ENCODE measurements at regions of chr6 and their contacts with region 1.

Region 1: GRCh38 chr6:117482240-117483003 is at the start of gene DCBLD1:
- DNase-seq: peak; percentile 75
- H3K4me3 Mint-ChIP-seq: peak within 1 kb of the TSS; percentile 92
- H3K27ac Mint-ChIP-seq: peak within 1 kb of the TSS; percentile 82
- H3K4me1 Mint-ChIP-seq: peaks cover 11% of the 10 kb centered on the region
- H3K27me3 Mint-ChIP-seq: no peaks in the 10 kb centered on the region
- CTCF ChIP-seq: no peak
- total RNA-seq, gene DCBLD1: 25.4 and 26.8 TPM in 2 replicates

Region 2: DNA sequence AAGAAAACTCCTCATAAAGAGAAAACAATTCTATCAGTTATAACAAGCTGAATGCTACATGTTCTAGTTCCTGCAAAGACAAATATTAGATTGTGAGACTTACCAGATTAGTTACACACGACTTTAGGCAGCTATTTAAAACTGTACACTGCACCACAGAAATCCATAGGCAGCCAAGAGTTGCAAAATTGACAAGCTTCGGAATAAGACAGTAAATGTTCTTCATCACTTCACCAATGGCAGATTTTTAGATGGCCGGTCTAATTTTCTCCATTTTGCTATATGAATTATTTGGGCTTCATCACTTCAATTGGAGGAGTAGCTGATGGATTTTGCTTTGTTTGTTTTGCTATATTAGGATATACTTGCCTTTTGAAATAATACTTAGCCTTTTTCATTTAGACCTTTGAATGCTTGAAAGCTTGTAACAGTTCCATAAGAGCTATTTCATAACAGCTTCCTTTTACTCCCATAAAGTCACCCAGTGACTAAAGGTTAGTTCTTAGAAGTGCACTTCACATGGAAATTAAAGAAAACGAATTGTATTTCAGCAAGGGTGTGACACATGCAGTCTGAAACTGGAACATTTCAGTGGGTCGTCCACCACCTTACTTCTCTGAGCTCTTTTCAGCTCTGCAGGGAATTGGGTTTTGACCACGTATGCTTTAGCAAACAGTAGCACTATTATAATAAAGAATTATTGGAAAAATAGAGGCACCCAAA is 56.8 kb before region 1 on chr6 and contains the start of gene ROS1:
- CTCF ChIA-PET with region 1: interaction called, 6 read pairs
- POLR2A ChIA-PET with region 1: interaction called, 35 read pairs
- intact Hi-C with region 1: no loop called
- DNase-seq: peak; percentile 70
- H3K4me3 Mint-ChIP-seq: peak within 1 kb of the TSS; percentile 79
- H3K27ac Mint-ChIP-seq: peak within 1 kb of the TSS; percentile 76
- H3K4me1 Mint-ChIP-seq: peaks cover 24% of the 10 kb centered on the region
- H3K27me3 Mint-ChIP-seq: no peaks in the 10 kb centered on the region
- CTCF ChIP-seq: no peak
- total RNA-seq, gene ROS1: 63.0 and 69.6 TPM in 2 replicates

Region 3: DNA sequence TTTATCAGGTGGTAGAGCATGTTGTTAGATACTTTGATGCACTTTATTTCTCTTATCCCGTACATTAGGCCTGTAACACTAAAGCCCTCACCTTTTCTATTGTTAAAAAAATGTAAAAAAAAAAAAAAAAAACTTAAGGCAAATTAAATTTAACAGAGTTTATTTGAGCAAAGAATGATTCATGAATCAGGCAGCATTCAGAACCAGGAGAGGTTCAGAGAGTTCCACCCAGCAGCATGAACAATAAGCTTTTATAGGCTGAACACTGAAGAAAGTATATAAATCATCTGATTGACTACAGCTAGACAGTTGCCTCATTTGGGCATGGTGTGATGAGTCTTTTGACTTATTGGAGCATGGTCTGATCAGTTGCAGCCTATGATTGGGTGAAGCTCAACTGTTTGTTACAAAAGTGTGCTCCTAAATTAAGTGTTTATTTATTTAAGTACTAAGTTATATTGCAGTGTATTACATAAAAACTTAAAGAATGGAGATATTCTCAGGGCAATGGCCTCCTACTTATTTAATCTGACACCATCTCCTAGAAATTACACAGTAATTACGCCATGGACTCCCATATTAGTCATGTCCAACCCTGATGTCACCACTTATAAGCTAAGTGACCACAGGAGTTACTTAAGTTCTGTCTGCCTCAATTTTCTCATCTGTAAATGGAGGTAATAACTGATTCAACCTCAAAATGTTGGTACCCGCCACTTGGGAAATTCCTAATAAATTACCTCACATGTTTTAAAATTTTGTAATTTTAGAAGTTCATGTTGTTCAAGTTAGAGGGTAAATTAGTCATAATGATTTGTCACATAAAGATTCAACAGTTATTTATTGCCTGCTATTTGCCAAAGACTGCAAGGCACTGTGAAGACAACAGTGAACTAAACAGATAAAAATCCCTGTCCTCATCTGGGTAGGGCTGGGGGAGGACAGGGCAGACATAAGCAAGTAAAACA is 41.6 kb before region 1 on chr6:
- CTCF ChIA-PET with region 1: interaction called, 3 read pairs
- POLR2A ChIA-PET with region 1: interaction called, 33 read pairs
- intact Hi-C with region 1: no loop called
- DNase-seq: peak; percentile 93
- H3K4me3 Mint-ChIP-seq: peak overlapping the region; percentile 66
- H3K27ac Mint-ChIP-seq: peak overlapping the region; percentile 97
- H3K4me1 Mint-ChIP-seq: peaks cover 44% of the 10 kb centered on the region
- H3K27me3 Mint-ChIP-seq: no peaks in the 10 kb centered on the region
- CTCF ChIP-seq: no peak

Region 4: DNA sequence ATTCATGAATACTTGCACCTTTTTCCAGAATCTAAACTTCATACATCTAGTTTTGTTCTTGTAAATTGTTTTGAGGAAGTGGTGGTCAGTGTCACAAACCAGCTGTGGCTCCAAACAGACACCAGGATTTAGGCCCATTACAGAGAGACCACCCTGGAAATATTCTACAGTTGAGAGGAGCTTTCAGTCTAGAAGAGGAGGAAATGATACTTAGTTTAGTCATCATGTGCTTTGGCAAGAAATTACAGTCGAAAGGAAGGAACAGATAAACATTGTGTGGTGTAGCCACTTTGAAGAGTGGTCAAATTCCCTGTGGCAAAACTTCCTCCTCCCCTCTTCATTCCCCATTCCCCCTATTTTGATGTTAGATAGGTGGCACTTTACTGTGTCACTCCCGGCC is 15.7 kb after region 1 on chr6:
- CTCF ChIA-PET with region 1: interaction called, 23 read pairs
- POLR2A ChIA-PET with region 1: interaction called, 165 read pairs
- intact Hi-C with region 1: no loop called
- DNase-seq: peak; percentile 80
- H3K4me3 Mint-ChIP-seq: peak overlapping the region; percentile 57
- H3K27ac Mint-ChIP-seq: peak overlapping the region; percentile 98
- H3K4me1 Mint-ChIP-seq: peaks cover 60% of the 10 kb centered on the region
- H3K27me3 Mint-ChIP-seq: no peaks in the 10 kb centered on the region
- CTCF ChIP-seq: no peak

Region 5: DNA sequence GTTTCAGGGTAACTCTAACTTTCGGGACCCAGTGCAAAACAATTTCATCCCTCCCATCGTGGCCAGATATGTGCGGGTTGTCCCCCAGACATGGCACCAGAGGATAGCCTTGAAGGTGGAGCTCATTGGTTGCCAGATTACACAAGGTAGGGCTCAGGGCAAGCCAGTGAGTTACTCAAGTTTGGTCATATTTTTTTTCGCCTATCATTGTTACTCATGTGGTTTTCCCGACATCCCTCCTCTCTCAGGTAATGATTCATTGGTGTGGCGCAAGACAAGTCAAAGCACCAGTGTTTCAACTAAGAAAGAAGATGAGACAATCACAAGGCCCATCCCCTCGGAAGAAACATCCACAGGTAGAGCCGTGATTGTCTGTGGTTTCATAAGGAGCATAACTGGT is 58.2 kb after region 1 on chr6:
- CTCF ChIA-PET with region 1: interaction called, 3 read pairs
- POLR2A ChIA-PET with region 1: interaction called, 13 read pairs
- intact Hi-C with region 1: loop called (anchors 5 kb)
- DNase-seq: peak; percentile 94
- H3K4me3 Mint-ChIP-seq: no peak overlapping the region
- H3K27ac Mint-ChIP-seq: no peak overlapping the region
- H3K4me1 Mint-ChIP-seq: peaks cover 46% of the 10 kb centered on the region
- H3K27me3 Mint-ChIP-seq: no peaks in the 10 kb centered on the region
- CTCF ChIP-seq: no peak

Region 6: DNA sequence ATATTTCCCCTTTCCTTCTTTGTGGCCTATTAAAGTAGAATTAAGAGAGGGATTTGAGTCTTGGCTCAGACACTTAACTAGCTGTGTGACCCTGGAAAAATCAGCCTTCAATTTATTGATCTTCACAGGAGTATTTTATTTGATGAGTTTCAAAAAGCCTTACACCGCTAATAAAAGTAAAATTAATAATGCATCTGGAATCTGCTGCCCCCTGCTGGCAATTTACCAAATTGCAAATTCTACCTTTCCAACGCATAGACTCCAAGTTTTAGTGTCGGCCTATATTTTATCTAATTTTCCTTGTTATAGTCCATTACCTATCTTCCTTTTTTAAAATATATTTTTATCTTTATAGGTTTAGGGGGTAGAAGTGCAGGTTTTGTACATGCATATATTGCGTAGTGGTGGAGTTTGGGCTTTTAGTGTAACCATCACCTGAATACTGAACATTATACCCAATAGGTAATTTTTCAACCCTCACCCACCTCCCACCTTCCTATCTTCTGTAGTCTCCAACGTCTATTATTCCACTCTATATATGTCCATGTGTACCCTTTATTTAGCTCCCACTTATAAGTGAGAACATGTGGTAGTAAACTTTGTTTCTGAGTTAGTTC is 73.6 kb after region 1 on chr6:
- CTCF ChIA-PET with region 1: interaction called, 10 read pairs
- POLR2A ChIA-PET with region 1: interaction called, 5 read pairs
- intact Hi-C with region 1: loop called (anchors 1 kb)
- DNase-seq: peak; percentile 67
- H3K4me3 Mint-ChIP-seq: no peak overlapping the region
- H3K27ac Mint-ChIP-seq: no peak overlapping the region
- H3K4me1 Mint-ChIP-seq: peaks cover 22% of the 10 kb centered on the region
- H3K27me3 Mint-ChIP-seq: no peaks in the 10 kb centered on the region
- CTCF ChIP-seq: peak; percentile 75

Measured in MCF 10A (cell line).